ENCODE measurements at regions of chr16 and their contacts with region 1.

Region 1: GRCh38 chr16:23987443-23987842 is 151.7 kb downstream of the PRKCB start:
- DNase-seq: peak; percentile 71
- ATAC-seq: peak; percentile 97
- H3K4me3 ChIP-seq: no peak overlapping the region
- H3K4me3 Mint-ChIP-seq: peak overlapping the region; percentile 56
- H3K27ac ChIP-seq: peak overlapping the region; percentile 3 to 65
- H3K27ac Mint-ChIP-seq: peak overlapping the region; percentile 64
- H3K4me1 ChIP-seq: peaks cover 18 to 20% of the 10 kb centered on the region in 2 donors
- H3K4me1 Mint-ChIP-seq: peaks cover 60% of the 10 kb centered on the region
- H3K27me3 ChIP-seq: no peaks in the 10 kb centered on the region
- H3K27me3 Mint-ChIP-seq: no peaks in the 10 kb centered on the region
- CTCF ChIP-seq: no peak

Region 2: DNA sequence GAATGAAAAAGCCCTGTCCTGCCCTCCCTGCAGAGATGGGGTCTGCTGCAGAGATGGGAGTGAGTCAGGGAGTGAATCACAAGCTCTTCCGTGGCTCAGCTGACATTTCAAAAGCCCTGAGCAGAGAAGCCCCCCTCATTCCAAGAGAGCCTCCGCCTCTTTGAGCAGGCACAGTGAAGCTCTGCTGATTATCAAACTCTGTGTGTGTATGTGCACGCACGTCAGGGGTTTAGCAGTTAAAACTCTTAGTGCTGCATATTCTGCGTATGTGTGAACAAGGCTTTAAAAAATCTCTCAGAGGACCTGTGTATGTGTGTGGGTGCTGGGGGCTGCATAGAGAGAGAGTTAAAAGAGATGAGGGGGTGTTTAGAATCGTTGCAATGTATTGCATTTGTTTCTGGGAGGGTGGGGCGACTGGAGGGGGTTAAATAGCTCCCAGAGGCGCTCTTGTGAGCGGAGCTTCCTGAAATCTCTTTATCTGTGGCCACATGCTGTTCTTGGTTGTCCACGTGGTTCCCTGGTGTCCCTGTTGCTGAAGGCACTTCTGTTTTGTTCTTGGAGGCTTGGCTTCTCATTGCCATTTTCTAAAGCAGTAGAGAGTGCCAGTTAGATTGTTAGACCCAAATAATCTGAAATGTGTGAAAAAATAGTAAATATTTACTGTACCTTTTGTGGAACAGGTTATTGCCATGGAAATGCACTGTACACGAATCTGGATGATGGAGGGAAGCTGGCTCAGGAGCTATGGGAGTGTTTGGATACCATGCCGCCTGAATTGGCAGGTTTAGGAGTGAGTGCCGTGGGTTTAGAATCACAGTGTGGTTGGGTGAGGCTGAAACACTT is 35.1 kb before region 1 on chr16:
- CTCF ChIA-PET with region 1: no interaction called
- POLR2A ChIA-PET with region 1: interaction called, 3 read pairs
- intact Hi-C with region 1: loop called (anchors 5 kb)
- DNase-seq: peak; percentile 38
- ATAC-seq: peak; percentile 29
- H3K4me3 ChIP-seq: peak overlapping the region in 1 of 5 experiments; percentile 15
- H3K4me3 Mint-ChIP-seq: peak overlapping the region; percentile 75
- H3K27ac ChIP-seq: peak overlapping the region; percentile 28 to 88
- H3K27ac Mint-ChIP-seq: peak overlapping the region; percentile 92
- H3K4me1 ChIP-seq: peaks cover 95 to 96% of the 10 kb centered on the region in 2 donors
- H3K4me1 Mint-ChIP-seq: peaks cover 93% of the 10 kb centered on the region
- H3K27me3 ChIP-seq: no peaks in the 10 kb centered on the region
- H3K27me3 Mint-ChIP-seq: no peaks in the 10 kb centered on the region
- CTCF ChIP-seq: no peak

Region 3: GRCh38 chr16:23966597-23967394 is 20.6 kb before region 1 on chr16:
- CTCF ChIA-PET with region 1: interaction called, 3 read pairs
- POLR2A ChIA-PET with region 1: no interaction called
- intact Hi-C with region 1: loop called (anchors 2 kb)
- DNase-seq: peak; percentile 50
- ATAC-seq: peak; percentile 76
- H3K4me3 ChIP-seq: peak overlapping the region in 1 of 5 experiments; percentile 1
- H3K4me3 Mint-ChIP-seq: peak overlapping the region; percentile 75
- H3K27ac ChIP-seq: peak overlapping the region; percentile 14 to 66
- H3K27ac Mint-ChIP-seq: peak overlapping the region; percentile 85
- H3K4me1 ChIP-seq: peaks cover 55% of the 10 kb centered on the region in 2 donors
- H3K4me1 Mint-ChIP-seq: peaks cover 88% of the 10 kb centered on the region
- H3K27me3 ChIP-seq: no peaks in the 10 kb centered on the region
- H3K27me3 Mint-ChIP-seq: no peaks in the 10 kb centered on the region
- CTCF ChIP-seq: no peak

Region 4: GRCh38 chr16:23998771-23999170 is 11.3 kb after region 1 on chr16:
- CTCF ChIA-PET with region 1: interaction called, 4 read pairs
- POLR2A ChIA-PET with region 1: interaction called, 3 read pairs
- intact Hi-C with region 1: loop called (anchors 2 kb)
- DNase-seq: no peak
- ATAC-seq: no peak
- H3K4me3 ChIP-seq: no peak overlapping the region
- H3K4me3 Mint-ChIP-seq: no peak overlapping the region
- H3K27ac ChIP-seq: no peak overlapping the region
- H3K27ac Mint-ChIP-seq: peak overlapping the region; percentile 87
- H3K4me1 ChIP-seq: peaks cover 22 to 24% of the 10 kb centered on the region in 2 donors
- H3K4me1 Mint-ChIP-seq: peaks cover 62% of the 10 kb centered on the region
- H3K27me3 ChIP-seq: no peaks in the 10 kb centered on the region
- H3K27me3 Mint-ChIP-seq: no peaks in the 10 kb centered on the region
- CTCF ChIP-seq: no peak